Esophagus squamous epithelium (tissue), 5 donors: ENCODE measurements at regions of chr14 and their contacts with region 1.

Region 1: DNA sequence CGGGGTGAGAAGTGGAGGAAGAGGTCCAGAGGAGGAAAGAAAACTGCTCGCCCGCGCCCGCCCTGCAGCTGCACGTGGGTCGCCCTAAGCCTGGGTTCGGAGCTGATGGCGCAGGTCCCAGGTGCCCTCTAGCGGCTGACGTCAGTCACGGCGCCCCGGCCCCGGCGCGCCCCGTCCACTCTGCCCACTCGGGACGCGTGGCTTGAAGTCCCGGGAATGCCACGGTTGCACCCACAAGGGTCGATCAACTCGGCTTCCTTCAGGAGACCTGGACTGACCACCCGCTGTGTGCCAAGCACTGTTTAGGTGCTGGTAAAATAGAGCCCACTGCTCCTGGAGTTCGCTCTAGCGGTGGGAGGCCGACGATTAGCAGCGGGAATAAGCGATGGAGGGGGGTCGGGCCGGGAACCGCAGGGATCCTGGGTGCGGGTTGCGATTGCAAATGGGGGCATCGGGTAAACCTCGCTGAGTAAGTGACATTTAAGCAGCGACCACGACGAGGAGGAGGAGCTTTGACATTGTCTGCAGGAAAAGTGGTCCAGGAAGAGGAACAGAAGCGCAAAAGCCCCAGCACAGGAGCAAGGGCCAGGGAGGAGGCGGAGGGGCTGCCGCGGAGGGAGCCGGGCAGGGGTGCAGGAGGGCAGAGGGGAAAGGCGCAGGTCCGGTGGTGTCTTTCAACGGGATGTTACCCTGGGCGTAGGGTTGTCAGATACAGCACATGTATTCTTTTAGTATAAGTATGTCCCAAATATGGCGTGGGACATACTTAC is 5.1 kb upstream of the ZNF839 start:
- DNase-seq: no peak
- H3K4me3 ChIP-seq: peak overlapping the region; percentile 33 to 65 (median 50)
- H3K27ac ChIP-seq: peak overlapping the region in 2 of 4 donors; percentile 4 to 62
- H3K4me1 ChIP-seq: peaks cover 5 to 51% (median 23%) of the 10 kb centered on the region in 3 donors
- H3K27me3 ChIP-seq: no peaks in the 10 kb centered on the region
- CTCF ChIP-seq: peak; percentile 89 to 97 (median 94)
- POLR2A ChIP-seq: no peak

Region 2: DNA sequence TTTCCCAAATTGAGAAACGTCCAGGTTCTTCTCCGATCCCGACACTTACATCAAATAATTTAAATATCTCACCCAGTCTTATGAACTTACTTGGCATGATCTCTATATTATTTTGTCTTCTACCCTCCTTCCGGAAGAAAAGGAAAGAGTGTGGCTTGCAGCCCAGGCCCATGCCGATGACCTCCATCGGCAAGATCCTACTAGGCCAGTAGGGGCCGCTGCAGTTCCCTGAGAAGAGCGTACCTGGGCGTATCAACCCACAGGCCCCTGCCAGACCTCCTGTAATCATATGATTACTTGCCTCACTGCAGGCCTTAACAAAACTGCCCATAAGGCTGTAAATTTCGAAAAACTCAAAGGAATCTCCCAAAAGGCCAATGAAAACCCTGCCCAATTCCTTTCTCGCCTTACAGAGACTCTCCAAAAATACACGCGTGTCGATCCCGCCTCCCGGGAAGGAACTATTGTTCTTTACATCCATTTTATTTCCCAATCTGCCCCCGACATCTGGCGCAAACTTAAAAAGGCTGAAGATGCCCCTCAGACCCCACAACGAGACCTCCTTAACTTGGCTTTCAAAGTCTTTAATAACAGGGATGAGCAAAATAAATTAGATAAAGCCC is 79.0 kb before region 1 on chr14:
- intact Hi-C with region 1: loop called (anchors 5 kb)
- DNase-seq: no peak
- H3K4me3 ChIP-seq: peak overlapping the region in 1 of 4 donors; percentile 37
- H3K27ac ChIP-seq: no peak overlapping the region
- H3K4me1 ChIP-seq: peaks cover 0 to 10% (median 0%) of the 10 kb centered on the region in 3 donors
- H3K27me3 ChIP-seq: no peaks in the 10 kb centered on the region
- CTCF ChIP-seq: peak; percentile 52 to 89 (median 86)
- POLR2A ChIP-seq: no peak